AG04449 (cell line): ENCODE measurements at regions of chr2 and their contacts with region 1.

Region 1: DNA sequence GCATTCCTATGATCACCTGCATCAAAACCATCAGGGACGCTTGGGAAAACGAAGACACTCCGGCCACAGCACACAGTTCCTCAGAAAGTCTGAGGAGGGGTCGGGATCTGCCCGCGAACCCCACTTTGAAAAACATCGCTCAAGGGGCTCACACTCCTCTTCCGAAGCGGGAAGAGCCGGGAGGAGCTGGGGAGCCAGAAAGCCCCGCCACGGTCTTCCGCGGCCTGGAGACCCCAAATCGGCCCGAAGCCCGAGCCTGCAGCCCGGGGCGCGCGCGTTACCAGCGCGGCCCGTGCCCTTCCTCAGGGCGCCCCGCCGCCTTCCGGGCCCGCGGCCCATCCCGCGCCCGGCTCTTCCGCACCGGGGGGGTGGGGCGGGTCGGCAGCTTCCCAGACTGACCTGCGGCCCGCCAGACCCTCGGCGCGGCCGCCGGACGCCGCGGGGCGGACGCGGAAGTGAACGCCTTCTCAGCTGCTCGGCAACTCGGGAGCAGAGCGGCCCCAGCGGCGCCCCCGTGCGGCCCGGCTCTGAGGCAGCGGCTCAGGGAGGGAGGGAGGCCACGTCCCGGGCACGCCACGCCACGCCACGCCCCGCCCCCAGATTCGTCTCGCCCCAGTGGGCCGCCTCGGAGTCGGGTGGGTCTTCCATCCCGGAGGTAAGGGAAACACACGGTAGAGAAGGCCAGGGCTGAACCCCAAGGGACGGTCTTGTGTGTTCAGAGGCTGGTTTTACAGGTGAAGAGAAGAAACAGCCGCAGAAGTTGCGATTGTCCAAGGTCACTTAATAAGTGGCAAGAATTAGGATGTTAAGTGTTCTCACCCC is at the start of gene KCTD18:
- DNase-seq: no peak
- H3K4me3 ChIP-seq: peak within 1 kb of the TSS; percentile 77
- CTCF ChIP-seq: peak; percentile 97

Region 2: DNA sequence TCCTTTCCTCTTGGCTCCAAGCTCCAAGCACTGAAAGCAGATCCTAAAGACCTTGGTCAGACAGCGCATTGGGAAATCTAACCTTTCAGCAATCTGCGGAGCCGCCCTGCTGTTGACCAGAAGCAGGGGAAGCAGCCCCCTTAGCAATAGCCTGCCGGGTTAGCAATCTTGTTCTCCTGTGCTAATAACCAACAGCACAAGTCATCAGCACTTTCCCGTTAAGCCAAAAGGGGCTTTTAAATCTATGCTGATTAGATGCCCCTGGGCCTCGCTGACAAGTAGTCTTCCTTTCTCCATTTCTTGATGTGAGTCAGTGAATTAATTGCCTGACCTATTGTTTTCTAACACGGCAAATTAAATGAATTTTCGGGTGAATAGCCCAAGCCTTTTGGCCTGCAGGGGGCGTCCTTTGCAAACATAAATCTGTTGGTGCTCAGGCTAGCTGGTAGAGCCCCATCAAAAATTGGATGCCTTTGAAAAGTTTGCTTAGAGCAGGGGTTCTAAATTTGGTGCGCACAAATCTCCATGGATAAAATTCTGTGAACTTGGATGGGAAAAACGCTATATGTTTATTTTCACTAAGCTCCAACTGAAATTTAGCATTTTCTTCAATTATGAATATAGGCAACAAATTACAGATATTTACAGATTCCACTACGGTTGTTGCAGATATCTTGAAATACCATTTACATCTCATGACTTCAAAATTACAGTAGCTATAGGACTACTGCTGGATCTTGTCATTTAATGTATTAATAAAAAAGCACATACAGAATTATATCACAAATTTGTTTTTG is 529.8 kb before region 1 on chr2:
- CTCF ChIA-PET with region 1: interaction called, 13 read pairs
- POLR2A ChIA-PET with region 1: no interaction called
- DNase-seq: peak; percentile 10
- H3K4me3 ChIP-seq: peak overlapping the region; percentile 7; the same call in 1 of the 2 replicates
- CTCF ChIP-seq: peak; percentile 56

Region 3: GRCh38 chr2:199985625-199986207 is 524.1 kb before region 1 on chr2:
- CTCF ChIA-PET with region 1: interaction called, 13 read pairs
- POLR2A ChIA-PET with region 1: no interaction called
- DNase-seq: no peak
- H3K4me3 ChIP-seq: no peak overlapping the region
- CTCF ChIP-seq: peak; percentile 70

Region 4: GRCh38 chr2:200490001-200490400 is 19.8 kb before region 1 on chr2:
- CTCF ChIA-PET with region 1: interaction called, 11 read pairs
- POLR2A ChIA-PET with region 1: interaction called, 4 read pairs
- DNase-seq: no peak
- H3K4me3 ChIP-seq: no peak overlapping the region
- CTCF ChIP-seq: no peak

Region 5: DNA sequence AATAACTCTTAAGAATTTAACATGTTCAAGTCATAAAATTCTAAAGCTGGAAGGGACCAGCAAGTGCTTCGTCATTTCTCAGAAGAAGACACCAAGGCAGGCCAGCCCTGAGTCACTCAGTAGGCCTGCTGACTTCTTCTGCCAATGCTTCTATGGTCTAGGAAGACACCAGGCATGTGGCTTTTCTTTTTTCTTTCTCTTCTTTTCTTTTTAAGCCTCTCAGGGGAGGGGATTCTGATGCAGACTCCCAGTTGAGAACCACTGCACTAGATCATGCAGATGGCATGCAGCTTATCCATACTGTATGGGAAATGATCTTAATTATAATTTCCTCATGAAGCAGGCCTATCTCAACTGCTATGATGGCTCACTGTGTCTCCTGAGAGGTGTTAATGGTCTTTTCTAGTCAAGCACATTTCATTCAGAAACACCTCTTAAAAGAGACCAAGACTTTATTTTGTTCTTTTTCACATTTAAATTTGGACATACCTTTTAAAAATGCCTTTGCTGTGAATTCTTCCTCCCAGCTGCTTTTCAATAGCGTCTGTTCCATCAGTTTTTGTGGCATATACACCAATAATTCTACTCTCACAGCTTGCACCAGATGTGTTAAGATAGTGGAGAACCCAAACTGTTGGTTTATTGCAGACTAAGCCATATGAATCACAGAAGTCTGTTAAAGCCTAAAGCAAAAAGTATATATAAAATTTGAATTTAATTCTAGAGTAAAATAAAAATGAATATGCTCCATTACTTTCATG is 11.2 kb before region 1 on chr2:
- CTCF ChIA-PET with region 1: interaction called, 27 read pairs
- POLR2A ChIA-PET with region 1: no interaction called
- DNase-seq: no peak
- H3K4me3 ChIP-seq: no peak overlapping the region
- CTCF ChIP-seq: no peak

Region 6: DNA sequence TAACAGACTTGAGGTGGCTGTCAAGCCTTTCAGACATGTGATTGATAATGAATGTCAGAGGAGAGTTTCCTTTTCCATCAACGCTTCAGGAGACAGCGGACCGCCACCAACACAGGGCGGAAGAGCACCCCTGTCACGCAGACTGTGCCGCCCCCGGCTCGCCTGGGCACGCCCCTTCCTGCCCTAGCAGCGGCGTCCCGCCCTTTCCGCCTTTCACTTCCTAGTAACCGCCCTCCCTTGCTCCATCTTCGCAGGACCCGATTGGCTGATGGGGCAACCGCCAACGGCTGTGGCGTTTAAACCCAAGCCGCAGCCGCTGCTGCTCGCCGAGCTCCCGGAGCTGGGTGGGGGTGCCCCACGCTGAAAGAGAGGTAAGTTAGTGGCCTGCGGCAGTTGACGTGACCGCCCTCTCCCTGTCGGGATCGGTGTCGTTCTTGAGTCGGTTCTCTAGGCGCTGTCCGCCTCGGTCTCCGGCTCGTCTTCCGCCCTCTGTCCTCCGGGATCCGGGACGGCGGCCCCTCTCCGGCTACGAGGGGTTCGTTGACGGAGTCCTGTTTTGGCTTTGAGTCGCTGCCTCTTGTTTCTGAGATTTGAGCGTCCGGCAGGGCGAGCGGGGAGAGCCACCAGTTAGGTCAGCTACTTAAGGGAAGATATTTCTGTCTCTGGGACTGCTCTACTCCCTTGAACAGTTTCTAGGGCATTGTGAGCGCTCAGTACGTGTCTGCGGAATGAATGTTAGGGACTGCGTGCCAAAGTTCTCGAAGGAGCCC is 16.2 kb after region 1 on chr2 and contains the start of gene SGO2:
- CTCF ChIA-PET with region 1: interaction called, 36 read pairs
- POLR2A ChIA-PET with region 1: no interaction called
- DNase-seq: peak; percentile 52
- H3K4me3 ChIP-seq: peak within 1 kb of the TSS; percentile 97
- CTCF ChIP-seq: no peak